Sigmoid colon (tissue), 7 donors: ENCODE measurements at regions of chr2 and their contacts with region 1.

Region 1: GRCh38 chr2:219057709-219058540 is 2.8 kb downstream of the IHH start:
- DNase-seq: peak; percentile 78
- H3K4me3 ChIP-seq: peak overlapping the region in 2 of 4 donors; percentile 17 to 31
- H3K27ac ChIP-seq: no peak overlapping the region
- H3K4me1 ChIP-seq: peaks cover 3 to 45% (median 42%) of the 10 kb centered on the region in 4 donors
- H3K27me3 ChIP-seq: peaks cover 55 to 87% (median 62%) of the 10 kb centered on the region in 3 donors
- CTCF ChIP-seq: peak; percentile 62 to 93 (median 80)
- EP300 ChIP-seq: no peak
- POLR2A ChIP-seq: no peak

Region 2: GRCh38 chr2:218898109-218898878 is 159.6 kb before region 1 on chr2:
- intact Hi-C with region 1: no loop called
- DNase-seq: peak; percentile 79
- H3K4me3 ChIP-seq: no peak overlapping the region
- H3K27ac ChIP-seq: no peak overlapping the region
- H3K4me1 ChIP-seq: peaks cover 0 to 28% (median 24%) of the 10 kb centered on the region in 4 donors
- H3K27me3 ChIP-seq: peaks cover 42 to 99% (median 90%) of the 10 kb centered on the region in 3 donors
- CTCF ChIP-seq: peak; percentile 78 to 97 (median 92)
- EP300 ChIP-seq: no peak
- POLR2A ChIP-seq: no peak

Region 3: DNA sequence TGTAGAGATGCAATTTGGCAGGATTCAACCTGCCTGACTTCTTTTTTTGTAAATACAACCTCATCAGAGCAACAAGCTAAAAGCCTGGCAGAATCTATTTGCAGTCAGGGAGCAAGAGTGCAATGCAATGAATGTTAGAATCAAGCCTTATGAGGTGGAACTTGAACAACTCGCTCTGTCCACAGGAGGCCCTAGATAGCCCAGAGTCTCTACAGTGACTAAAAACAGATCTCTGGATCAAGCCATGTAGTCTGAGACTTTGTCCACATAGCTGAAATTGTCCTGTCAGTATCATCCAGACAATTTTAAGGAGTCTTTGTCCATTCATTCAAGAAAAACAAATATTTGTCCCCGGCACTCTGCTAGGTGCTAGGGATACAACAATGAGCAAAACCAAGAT is 130.5 kb before region 1 on chr2:
- intact Hi-C with region 1: no loop called
- DNase-seq: no peak
- H3K4me3 ChIP-seq: no peak overlapping the region
- H3K27ac ChIP-seq: no peak overlapping the region
- H3K4me1 ChIP-seq: no peaks in the 10 kb centered on the region
- H3K27me3 ChIP-seq: peaks cover 0 to 6% (median 3%) of the 10 kb centered on the region in 3 donors
- CTCF ChIP-seq: no peak
- EP300 ChIP-seq: no peak
- POLR2A ChIP-seq: no peak

Region 4: GRCh38 chr2:219119422-219120043 is 61.6 kb after region 1 on chr2:
- intact Hi-C with region 1: loop called (anchors 1 kb)
- DNase-seq: no peak
- H3K4me3 ChIP-seq: no peak overlapping the region
- H3K27ac ChIP-seq: no peak overlapping the region
- H3K4me1 ChIP-seq: no peaks in the 10 kb centered on the region
- H3K27me3 ChIP-seq: no peaks in the 10 kb centered on the region
- CTCF ChIP-seq: peak in 3 of 4 experiments; percentile 47 to 66 (median 52)
- EP300 ChIP-seq: no peak
- POLR2A ChIP-seq: no peak

Region 5: GRCh38 chr2:219155054-219155644 is 97.2 kb after region 1 on chr2:
- intact Hi-C with region 1: loop called (anchors 2 kb)
- DNase-seq: no peak
- H3K4me3 ChIP-seq: no peak overlapping the region
- H3K27ac ChIP-seq: no peak overlapping the region
- H3K4me1 ChIP-seq: peaks cover 0 to 6% (median 5%) of the 10 kb centered on the region in 4 donors
- H3K27me3 ChIP-seq: no peaks in the 10 kb centered on the region
- CTCF ChIP-seq: peak in 3 of 4 experiments; percentile 47 to 64 (median 62)
- EP300 ChIP-seq: no peak
- POLR2A ChIP-seq: no peak

Region 6: GRCh38 chr2:219294356-219295351 is 236.7 kb after region 1 on chr2:
- intact Hi-C with region 1: loop called (anchors 5 kb)
- DNase-seq: peak; percentile 91
- H3K4me3 ChIP-seq: peak overlapping the region; percentile 43 to 65 (median 54)
- H3K27ac ChIP-seq: peak overlapping the region; percentile 84 to 91 (median 90)
- H3K4me1 ChIP-seq: peaks cover 0 to 19% (median 18%) of the 10 kb centered on the region in 4 donors
- H3K27me3 ChIP-seq: peaks cover 0 to 2% (median 2%) of the 10 kb centered on the region in 3 donors
- CTCF ChIP-seq: peak; percentile 85 to 99 (median 91)
- EP300 ChIP-seq: no peak
- POLR2A ChIP-seq: no peak